ENCODE measurements at regions of chr3 and their contacts with region 1.

Region 1: DNA sequence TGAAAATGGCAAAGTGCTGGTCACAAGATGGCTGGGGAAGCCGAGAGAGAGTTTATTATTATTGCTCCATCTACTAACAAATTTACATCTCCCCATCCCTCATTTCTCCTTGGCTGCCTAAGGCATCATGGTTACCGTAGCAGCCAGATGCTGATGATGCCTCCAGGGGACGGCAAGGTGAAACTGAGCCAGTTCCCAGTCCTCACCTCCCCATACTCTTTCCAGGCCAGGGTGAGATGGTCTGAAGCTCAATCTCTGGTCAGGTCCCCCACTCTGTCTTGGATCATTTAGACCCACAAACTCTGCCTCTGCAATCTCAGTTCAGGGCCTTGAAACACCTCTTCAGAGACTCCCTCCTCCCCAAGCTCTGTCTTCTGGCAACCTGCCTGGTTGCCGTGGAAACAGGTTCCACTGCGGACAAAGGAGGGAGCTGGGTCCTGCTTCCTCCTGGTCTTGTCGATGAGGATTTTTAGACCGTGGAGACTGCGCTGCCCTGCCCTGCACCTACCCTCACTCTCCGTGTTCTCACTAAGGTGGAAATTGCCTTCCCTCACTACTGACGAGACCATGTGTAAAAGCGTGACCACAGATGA is at the start of gene RTP1:
- DNase-seq: peak; percentile 38
- ATAC-seq: peak; percentile 81
- H3K4me3 Mint-ChIP-seq: no peak within 1 kb of the TSS
- H3K27ac Mint-ChIP-seq: no peak within 1 kb of the TSS
- H3K4me1 Mint-ChIP-seq: peaks cover 29% of the 10 kb centered on the region
- H3K27me3 Mint-ChIP-seq: no peaks in the 10 kb centered on the region; the same call in 1 of the 2 replicates
- CTCF ChIP-seq: no peak
- total RNA-seq, gene RTP1: 5.1 to 5.9 TPM (median 5.6 TPM) in 3 replicates

Region 2: DNA sequence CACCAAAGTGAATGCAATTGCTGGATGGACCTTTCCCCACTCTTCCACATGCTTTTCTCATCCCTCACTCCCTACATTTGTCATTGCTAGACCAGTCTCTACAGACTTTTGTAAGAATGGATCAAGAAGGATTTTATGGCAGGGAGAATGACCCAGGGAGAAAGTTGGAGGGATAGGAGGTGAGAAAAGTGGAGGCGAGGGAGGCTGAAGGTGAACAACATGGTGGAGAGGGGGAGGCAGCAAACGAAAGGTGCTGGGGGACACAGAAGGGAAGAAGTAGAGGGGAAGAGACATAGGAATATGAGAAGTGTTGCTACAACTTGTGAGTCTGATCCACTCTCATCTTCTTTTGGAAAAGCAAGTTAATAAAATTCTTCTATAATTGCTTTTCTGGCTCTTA is 24.2 kb before region 1 on chr3:
- CTCF ChIA-PET with region 1: no interaction called
- POLR2A ChIA-PET with region 1: no interaction called
- DNase-seq: no peak
- ATAC-seq: no peak
- H3K4me3 Mint-ChIP-seq: peak overlapping the region; percentile 99
- H3K27ac Mint-ChIP-seq: peak overlapping the region; percentile 89
- H3K4me1 Mint-ChIP-seq: peaks cover 66% of the 10 kb centered on the region
- H3K27me3 Mint-ChIP-seq: no peaks in the 10 kb centered on the region; the same call in none of the 2 replicates
- CTCF ChIP-seq: no peak

Region 3: DNA sequence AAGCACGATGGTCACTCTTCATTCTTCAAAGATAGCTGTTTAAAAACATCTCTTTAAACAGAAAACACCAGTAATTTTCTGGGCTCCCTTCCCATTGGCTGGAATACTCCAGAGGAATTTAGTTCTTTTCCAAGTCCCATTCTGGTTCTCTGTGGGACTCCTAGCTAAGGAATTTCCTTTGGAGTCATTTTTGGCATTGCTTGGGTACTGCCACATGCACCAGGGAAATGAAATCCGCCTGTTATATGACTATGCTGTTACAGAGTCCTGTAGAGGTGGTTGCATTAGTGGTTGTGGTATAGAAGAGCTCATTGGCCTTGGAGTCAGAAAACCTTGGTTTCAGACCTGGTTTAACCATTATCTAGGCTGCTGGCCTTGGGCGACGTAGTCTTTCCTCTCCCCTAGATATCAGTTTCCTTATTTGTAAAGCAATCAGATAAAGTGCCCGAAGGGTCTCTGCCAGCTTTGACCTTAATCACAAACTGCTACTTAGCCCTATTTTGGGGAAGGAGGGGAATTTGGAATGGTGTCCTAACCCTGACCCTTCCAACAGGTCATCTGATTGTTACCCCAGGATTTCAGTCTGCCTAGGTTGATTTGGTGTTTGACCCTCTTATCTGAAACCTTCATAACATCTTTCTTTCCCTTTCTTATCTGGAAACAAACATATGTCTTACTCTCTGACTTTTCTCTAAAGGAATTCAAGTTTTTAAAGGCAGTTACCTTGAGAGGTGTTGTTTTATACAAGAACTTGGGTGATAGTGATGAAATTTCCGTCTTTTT is 13.6 kb after region 1 on chr3:
- CTCF ChIA-PET with region 1: interaction called, 13 read pairs
- POLR2A ChIA-PET with region 1: no interaction called
- DNase-seq: no peak
- ATAC-seq: peak; percentile 94
- H3K4me3 Mint-ChIP-seq: no peak overlapping the region
- H3K27ac Mint-ChIP-seq: peak overlapping the region; percentile 46
- H3K4me1 Mint-ChIP-seq: peaks cover 25% of the 10 kb centered on the region
- H3K27me3 Mint-ChIP-seq: peaks cover 16% of the 10 kb centered on the region
- CTCF ChIP-seq: no peak